OCI-LY7 (cell line): ENCODE measurements at regions of chr4 and their contacts with region 1.

Region 1: DNA sequence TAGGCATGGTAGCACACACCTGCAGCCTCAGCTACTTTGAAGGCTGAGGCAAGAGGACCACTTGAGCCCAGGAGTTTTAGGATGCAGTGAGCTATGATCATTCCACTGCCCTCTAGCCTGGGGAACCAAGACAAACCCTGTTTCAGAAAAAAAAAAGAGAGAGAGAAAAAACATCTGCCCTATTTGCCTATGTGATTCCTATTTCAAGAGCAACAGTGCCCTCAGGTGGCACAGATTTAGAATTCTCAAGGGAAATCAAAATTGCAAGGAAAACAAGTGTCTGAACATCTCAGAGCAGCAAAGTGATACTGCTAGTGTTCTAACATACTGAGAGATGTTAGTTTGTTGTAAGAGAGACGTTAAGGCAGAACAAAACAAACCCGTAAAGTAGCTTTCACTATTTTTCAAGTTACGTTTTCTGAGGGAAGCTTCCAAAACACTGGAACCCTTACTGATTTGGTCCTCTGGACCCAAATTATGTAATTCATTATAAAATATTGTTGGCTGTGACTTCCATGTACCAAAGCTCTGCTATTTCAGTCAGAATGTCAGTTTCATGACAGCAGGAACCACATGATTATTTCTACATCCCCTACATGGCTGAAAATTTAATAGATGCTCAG is 7.9 kb downstream of the BDH2 start:
- DNase-seq: peak; percentile 88
- H3K4me3 ChIP-seq: no peak overlapping the region
- H3K27ac ChIP-seq: peak overlapping the region; percentile 12
- H3K4me1 ChIP-seq: peaks cover 20% of the 10 kb centered on the region
- CTCF ChIP-seq: peak; percentile 96

Region 2: GRCh38 chr4:102430461-102430910 is 661.2 kb before region 1 on chr4:
- CTCF ChIA-PET with region 1: no interaction called
- POLR2A ChIA-PET with region 1: interaction called, 4 read pairs
- intact Hi-C with region 1: loop called (anchors 2 kb)
- DNase-seq: no peak
- H3K4me3 ChIP-seq: peak overlapping the region; percentile 69
- H3K27ac ChIP-seq: peak overlapping the region; percentile 48
- H3K4me1 ChIP-seq: peaks cover 6% of the 10 kb centered on the region
- CTCF ChIP-seq: no peak

Region 3: DNA sequence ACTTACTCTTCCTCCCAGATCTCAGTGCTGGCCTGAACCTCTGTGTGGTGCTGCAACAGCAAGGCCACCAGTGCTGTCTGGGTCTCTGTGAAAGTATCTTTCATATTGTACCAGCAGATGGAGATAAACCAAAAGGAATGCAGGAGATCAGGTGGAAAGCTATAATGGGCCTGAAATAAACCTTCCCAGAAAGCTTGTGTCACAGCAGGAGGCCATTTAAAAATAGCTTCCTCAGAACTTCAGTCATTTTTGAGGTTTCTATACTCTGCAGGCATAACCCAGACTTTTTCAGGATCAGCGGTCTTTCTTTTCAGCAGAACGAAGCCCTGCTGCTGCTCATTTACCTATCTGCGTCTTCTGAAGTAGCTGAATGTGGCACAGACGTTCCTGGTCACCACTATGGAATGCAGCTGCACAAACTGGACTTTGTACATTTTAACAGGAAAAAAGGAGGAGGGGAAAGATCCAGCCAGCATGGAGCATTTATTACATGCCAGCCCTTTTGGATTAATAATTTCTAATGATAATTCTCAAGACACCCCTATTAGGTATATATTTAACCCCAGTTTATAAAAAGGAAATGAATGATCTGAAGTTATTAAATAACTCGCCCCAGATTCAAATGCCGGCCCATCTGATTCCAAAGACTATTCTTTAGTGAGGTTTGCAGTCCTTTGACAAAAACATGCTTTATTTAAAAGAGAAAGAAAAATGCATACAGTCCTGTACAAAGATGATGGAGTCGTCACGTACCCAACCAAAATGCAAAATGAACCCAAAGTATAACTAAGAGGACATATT is 470.8 kb before region 1 on chr4:
- CTCF ChIA-PET with region 1: no interaction called
- POLR2A ChIA-PET with region 1: interaction called, 4 read pairs
- intact Hi-C with region 1: loop called (anchors 2 kb)
- DNase-seq: peak; percentile 59
- H3K4me3 ChIP-seq: no peak overlapping the region
- H3K27ac ChIP-seq: no peak overlapping the region
- H3K4me1 ChIP-seq: peaks cover 5% of the 10 kb centered on the region
- CTCF ChIP-seq: peak; percentile 77

Region 4: DNA sequence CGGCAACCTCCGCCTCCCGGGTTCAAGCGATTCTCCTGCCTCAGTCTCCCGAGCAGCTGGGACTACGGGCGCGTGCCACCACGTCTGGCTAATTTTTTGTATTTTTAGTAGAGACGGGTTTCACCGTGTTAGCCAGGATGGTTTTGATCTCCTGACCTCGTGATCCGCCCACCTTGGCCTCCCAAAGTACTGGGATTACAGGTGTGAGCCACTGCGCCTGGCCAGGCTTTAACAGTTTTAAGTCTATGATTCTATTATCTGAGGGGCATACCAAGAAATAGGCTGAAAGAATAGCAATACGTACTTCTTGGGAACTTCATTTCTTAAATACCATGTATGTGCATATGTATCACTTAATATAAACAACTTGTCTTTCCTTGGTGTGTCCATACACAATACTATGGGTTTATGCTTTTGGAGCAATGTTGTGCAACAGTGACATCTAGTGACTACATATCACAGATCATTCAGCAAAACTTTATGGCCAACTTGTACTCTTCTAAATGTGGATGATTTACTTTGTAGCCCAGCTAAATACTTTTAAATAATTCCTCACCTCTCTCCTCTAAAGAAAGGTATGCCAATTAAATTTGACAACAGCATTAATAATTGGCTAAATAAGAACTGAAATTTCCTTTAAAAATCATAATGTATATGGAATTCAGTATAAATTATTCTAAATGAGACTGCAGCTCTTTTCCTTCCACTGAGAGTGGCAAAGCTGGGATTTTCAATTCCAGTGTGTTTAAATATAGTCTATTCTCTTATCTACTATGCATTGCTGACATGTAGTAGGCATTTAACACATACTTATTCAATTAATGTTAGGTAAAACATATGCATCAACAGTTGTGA is 82.6 kb before region 1 on chr4:
- CTCF ChIA-PET with region 1: interaction called, 3 read pairs
- POLR2A ChIA-PET with region 1: interaction called, 3 read pairs
- intact Hi-C with region 1: loop called (anchors 1 kb)
- DNase-seq: peak; percentile 75
- H3K4me3 ChIP-seq: no peak overlapping the region
- H3K27ac ChIP-seq: no peak overlapping the region
- H3K4me1 ChIP-seq: no peaks in the 10 kb centered on the region
- CTCF ChIP-seq: peak; percentile 91

Region 5: GRCh38 chr4:103075901-103076739 is 15.6 kb before region 1 on chr4:
- CTCF ChIA-PET with region 1: interaction called, 5 read pairs
- POLR2A ChIA-PET with region 1: interaction called, 49 read pairs
- intact Hi-C with region 1: no loop called
- DNase-seq: peak; percentile 79
- H3K4me3 ChIP-seq: peak overlapping the region; percentile 79
- H3K27ac ChIP-seq: peak overlapping the region; percentile 86
- H3K4me1 ChIP-seq: peaks cover 51% of the 10 kb centered on the region
- CTCF ChIP-seq: peak; percentile 39; the same call in 1 of the 2 replicates